ENCODE measurements at regions of chr19 and their contacts with region 1.

Region 1: GRCh38 chr19:34816708-34817107 is 43.7 kb upstream of the ZNF599 start:
- DNase-seq: no peak
- H3K4me3 ChIP-seq: no peak overlapping the region
- H3K27ac ChIP-seq: no peak overlapping the region
- H3K4me1 ChIP-seq: no peaks in the 10 kb centered on the region
- H3K27me3 ChIP-seq: no peaks in the 10 kb centered on the region
- CTCF ChIP-seq: no peak
- POLR2A ChIP-seq: no peak

Region 2: GRCh38 chr19:34793565-34793964 is 23.1 kb before region 1 on chr19:
- intact Hi-C with region 1: loop called (anchors 1 kb)
- DNase-seq: no peak
- H3K4me3 ChIP-seq: no peak overlapping the region
- H3K27ac ChIP-seq: no peak overlapping the region
- H3K4me1 ChIP-seq: no peaks in the 10 kb centered on the region
- H3K27me3 ChIP-seq: no peaks in the 10 kb centered on the region
- CTCF ChIP-seq: no peak
- POLR2A ChIP-seq: no peak

Region 3: GRCh38 chr19:34804115-34804514 is 12.6 kb before region 1 on chr19:
- intact Hi-C with region 1: no loop called
- DNase-seq: no peak
- H3K4me3 ChIP-seq: no peak overlapping the region
- H3K27ac ChIP-seq: no peak overlapping the region
- H3K4me1 ChIP-seq: no peaks in the 10 kb centered on the region
- H3K27me3 ChIP-seq: no peaks in the 10 kb centered on the region
- CTCF ChIP-seq: no peak
- POLR2A ChIP-seq: no peak

Region 4: DNA sequence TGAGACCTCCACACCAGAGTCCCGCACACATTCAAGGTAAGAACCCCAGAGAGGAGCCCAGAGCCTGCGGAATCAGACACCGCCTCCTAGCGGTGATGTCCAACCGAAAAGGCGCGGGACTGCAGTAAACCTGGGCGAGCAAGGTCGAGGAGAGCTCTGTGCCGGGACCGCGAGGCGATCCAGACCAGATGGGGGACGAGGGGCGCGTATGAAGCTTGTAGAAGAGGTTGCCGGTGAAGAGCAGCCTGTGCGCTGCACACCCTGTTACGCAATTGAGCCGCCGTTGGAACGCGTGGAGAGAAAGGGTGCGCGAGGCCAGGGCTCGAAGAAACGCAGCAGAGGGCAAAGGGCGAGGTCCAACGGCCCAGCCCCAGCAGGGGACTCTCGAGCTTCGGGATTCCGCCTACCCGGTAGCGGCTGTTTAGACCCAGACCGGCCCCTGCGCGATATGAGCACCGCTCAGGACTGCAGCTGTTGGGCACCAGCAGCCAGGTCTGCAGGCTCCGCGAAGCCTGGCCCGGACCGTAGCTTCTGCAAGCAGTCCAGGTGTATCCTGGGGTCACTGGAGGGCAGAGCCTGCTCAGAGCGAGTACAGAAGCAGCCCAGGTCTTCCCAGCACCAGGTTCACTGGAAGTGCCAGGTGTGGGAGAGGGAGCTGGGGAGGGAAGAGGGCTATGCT is 22.2 kb after region 1 on chr19:
- intact Hi-C with region 1: no loop called
- DNase-seq: no peak
- H3K4me3 ChIP-seq: peak overlapping the region in 1 of 3 donors; percentile 53
- H3K27ac ChIP-seq: no peak overlapping the region
- H3K4me1 ChIP-seq: no peaks in the 10 kb centered on the region
- H3K27me3 ChIP-seq: peaks cover 0 to 3% of the 10 kb centered on the region in 2 donors
- CTCF ChIP-seq: no peak
- POLR2A ChIP-seq: no peak